Activated naive CD4-positive, alpha-beta T cell treated with anti-CD3 and anti-CD28 coated beads for 36 hours (primary cell): ENCODE measurements at regions of chr13 and their contacts with region 1.

Region 1: DNA sequence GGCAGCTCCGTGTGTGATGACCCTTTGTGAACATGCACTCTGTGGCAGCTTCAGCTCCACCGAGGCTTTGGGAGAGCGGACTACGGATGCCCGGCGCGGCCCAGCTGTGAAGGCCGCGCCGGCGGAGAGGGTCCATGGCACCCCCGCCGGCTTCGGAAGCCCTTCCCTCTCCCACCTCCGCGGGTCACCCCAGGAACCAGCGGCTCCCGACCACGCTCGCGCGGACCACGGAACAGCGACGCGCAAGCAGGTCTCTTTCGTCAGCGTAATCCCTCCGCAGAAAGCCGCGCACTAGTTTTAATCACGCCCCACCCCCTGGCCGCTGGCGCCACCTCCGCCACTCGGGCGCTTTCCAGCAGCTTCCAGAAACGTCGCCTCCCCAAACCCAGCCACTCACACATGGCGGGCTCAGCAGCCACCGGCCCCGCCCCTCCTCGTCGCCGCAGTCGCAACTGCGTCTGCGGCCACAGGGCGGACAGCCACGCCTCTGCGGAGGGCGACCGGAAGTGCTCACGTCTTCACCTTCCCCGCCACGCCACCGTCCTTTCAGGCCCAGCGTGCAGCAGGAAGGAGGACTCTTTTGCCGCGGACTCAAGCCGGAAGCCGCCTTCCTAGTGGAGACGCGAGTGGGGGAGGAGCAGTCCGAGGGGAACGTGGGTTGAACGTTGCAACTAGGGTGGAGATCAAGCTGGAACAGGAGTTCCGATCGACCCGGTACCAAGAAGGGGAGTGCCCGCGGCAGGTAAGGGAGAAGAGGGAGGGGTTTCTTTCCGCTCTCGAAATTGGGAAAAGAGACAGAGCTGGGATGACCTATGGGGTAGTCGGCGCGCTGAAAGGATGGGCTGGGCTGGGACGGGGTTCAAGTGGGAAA is at the start of gene USPL1:
- DNase-seq: peak; percentile 98
- H3K4me3 Mint-ChIP-seq: no peak within 1 kb of the TSS
- H3K27ac Mint-ChIP-seq: no peak within 1 kb of the TSS
- H3K4me1 Mint-ChIP-seq: peaks cover 29% of the 10 kb centered on the region
- H3K27me3 Mint-ChIP-seq: no peaks in the 10 kb centered on the region
- total RNA-seq, gene USPL1: 10.7 to 11.3 TPM

Region 2: GRCh38 chr13:29595380-29596063 is 1022.0 kb before region 1 on chr13 and contains the start of gene SLC7A1:
- CTCF ChIA-PET with region 1: no interaction called
- intact Hi-C with region 1: loop called (anchors 10 kb)
- DNase-seq: peak; percentile 84
- H3K4me3 Mint-ChIP-seq: peak within 1 kb of the TSS; percentile 90
- H3K27ac Mint-ChIP-seq: peak within 1 kb of the TSS; percentile 95
- H3K4me1 Mint-ChIP-seq: peaks cover 39% of the 10 kb centered on the region
- H3K27me3 Mint-ChIP-seq: no peaks in the 10 kb centered on the region
- total RNA-seq, gene SLC7A1: 115 to 119 TPM

Region 3: GRCh38 chr13:30306762-30307193 is 310.8 kb before region 1 on chr13:
- CTCF ChIA-PET with region 1: no interaction called
- intact Hi-C with region 1: loop called (anchors 1 kb)
- DNase-seq: peak; percentile 94
- H3K4me3 Mint-ChIP-seq: peak overlapping the region; percentile 83
- H3K27ac Mint-ChIP-seq: peak overlapping the region; percentile 76
- H3K4me1 Mint-ChIP-seq: peaks cover 14% of the 10 kb centered on the region
- H3K27me3 Mint-ChIP-seq: no peaks in the 10 kb centered on the region

Region 4: DNA sequence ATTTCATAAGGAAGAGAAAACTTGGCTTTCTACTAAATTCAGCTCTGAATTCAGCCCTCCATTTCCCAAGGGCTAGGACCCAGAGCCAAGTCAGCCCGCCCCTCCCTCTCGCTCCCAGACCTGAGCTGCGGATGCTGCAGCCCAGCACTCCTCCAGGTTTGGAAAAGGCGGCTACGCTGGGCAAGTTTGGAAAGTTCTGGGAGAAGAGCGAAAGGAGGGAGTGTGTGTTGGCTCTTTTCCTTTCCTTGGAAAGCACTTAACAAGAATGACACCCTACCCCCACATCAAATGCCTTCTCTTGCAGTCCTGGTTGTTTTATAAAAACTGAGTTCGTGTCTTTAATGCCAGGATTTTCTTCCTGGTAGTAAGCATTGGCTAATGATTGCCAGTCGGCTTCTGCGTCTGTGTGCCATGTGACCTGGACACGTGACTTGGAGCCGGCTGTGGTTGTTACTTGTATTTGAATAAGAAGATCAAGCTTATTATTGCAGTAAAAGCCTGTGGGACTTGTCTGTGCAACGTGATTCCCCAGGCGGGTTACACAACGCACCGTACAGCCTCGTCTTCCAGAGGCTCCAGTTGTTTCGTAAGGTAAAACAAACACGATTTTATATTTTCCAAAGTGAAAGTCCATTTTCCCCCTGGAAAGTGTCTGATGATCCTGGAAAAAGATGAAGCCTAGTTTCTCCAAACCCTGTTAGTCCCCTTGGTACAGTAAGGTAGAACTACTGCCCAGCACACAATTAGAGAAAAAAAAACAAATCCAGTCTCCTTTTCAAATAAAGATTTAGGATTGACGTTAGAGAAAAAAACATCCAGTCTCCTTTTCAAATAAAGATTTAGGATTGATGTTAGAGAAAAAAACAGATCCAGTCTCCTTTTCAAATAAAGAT is 222.1 kb before region 1 on chr13:
- CTCF ChIA-PET with region 1: no interaction called
- intact Hi-C with region 1: loop called (anchors 1 kb)
- DNase-seq: peak; percentile 88
- H3K4me3 Mint-ChIP-seq: peak overlapping the region; percentile 85
- H3K27ac Mint-ChIP-seq: peak overlapping the region; percentile 94
- H3K4me1 Mint-ChIP-seq: peaks cover 23% of the 10 kb centered on the region
- H3K27me3 Mint-ChIP-seq: no peaks in the 10 kb centered on the region

Region 5: GRCh38 chr13:30429721-30430694 is 187.5 kb before region 1 on chr13:
- CTCF ChIA-PET with region 1: no interaction called
- intact Hi-C with region 1: loop called (anchors 1 kb)
- DNase-seq: peak; percentile 53
- H3K4me3 Mint-ChIP-seq: peak overlapping the region; percentile 47
- H3K27ac Mint-ChIP-seq: peak overlapping the region; percentile 82
- H3K4me1 Mint-ChIP-seq: peaks cover 29% of the 10 kb centered on the region
- H3K27me3 Mint-ChIP-seq: no peaks in the 10 kb centered on the region

Region 6: GRCh38 chr13:30673669-30674521 is 56.3 kb after region 1 on chr13:
- CTCF ChIA-PET with region 1: no interaction called
- intact Hi-C with region 1: loop called (anchors 1 kb)
- DNase-seq: peak; percentile 84
- H3K4me3 Mint-ChIP-seq: peak overlapping the region; percentile 82
- H3K27ac Mint-ChIP-seq: peak overlapping the region; percentile 41
- H3K4me1 Mint-ChIP-seq: peaks cover 8% of the 10 kb centered on the region
- H3K27me3 Mint-ChIP-seq: no peaks in the 10 kb centered on the region

Region 7: GRCh38 chr13:30712536-30713532 is 95.3 kb after region 1 on chr13:
- CTCF ChIA-PET with region 1: no interaction called
- intact Hi-C with region 1: no loop called
- DNase-seq: peak; percentile 20
- H3K4me3 Mint-ChIP-seq: no peak overlapping the region
- H3K27ac Mint-ChIP-seq: no peak overlapping the region
- H3K4me1 Mint-ChIP-seq: peaks cover 4% of the 10 kb centered on the region
- H3K27me3 Mint-ChIP-seq: peaks cover 2% of the 10 kb centered on the region

Region 8: GRCh38 chr13:30752201-30752797 is 134.7 kb after region 1 on chr13:
- CTCF ChIA-PET with region 1: no interaction called
- intact Hi-C with region 1: no loop called
- DNase-seq: no peak
- H3K4me3 Mint-ChIP-seq: no peak overlapping the region
- H3K27ac Mint-ChIP-seq: no peak overlapping the region
- H3K4me1 Mint-ChIP-seq: peaks cover 7% of the 10 kb centered on the region
- H3K27me3 Mint-ChIP-seq: no peaks in the 10 kb centered on the region

Region 9: GRCh38 chr13:31044377-31045285 is 427.1 kb after region 1 on chr13:
- CTCF ChIA-PET with region 1: no interaction called
- intact Hi-C with region 1: loop called (anchors 2 kb)
- DNase-seq: peak; percentile 93
- H3K4me3 Mint-ChIP-seq: no peak overlapping the region
- H3K27ac Mint-ChIP-seq: peak overlapping the region; percentile 78
- H3K4me1 Mint-ChIP-seq: peaks cover 43% of the 10 kb centered on the region
- H3K27me3 Mint-ChIP-seq: peaks cover 2% of the 10 kb centered on the region